ENCODE measurements at regions of chr2 and their contacts with region 1.

Region 1: GRCh38 chr2:71609958-71610357 is 156.6 kb downstream of the DYSF start:
- DNase-seq: peak; percentile 10
- H3K4me3 ChIP-seq: no peak overlapping the region
- H3K27ac ChIP-seq: no peak overlapping the region
- H3K4me1 ChIP-seq: no peaks in the 10 kb centered on the region
- H3K27me3 ChIP-seq: no peaks in the 10 kb centered on the region
- CTCF ChIP-seq: peak; percentile 6 to 42

Region 2: GRCh38 chr2:71447280-71447679 is 162.7 kb before region 1 on chr2:
- CTCF ChIA-PET with region 1: no interaction called
- dilution Hi-C with region 1: no loop called
- in situ Hi-C with region 1: no loop called
- intact Hi-C with region 1: no loop called
- DNase-seq: peak; percentile 34
- H3K4me3 ChIP-seq: no peak overlapping the region
- H3K27ac ChIP-seq: no peak overlapping the region
- H3K4me1 ChIP-seq: peaks cover 9% of the 10 kb centered on the region
- H3K27me3 ChIP-seq: no peaks in the 10 kb centered on the region
- CTCF ChIP-seq: no peak

Region 3: GRCh38 chr2:71558300-71559051 is 51.5 kb before region 1 on chr2:
- CTCF ChIA-PET with region 1: no interaction called
- dilution Hi-C with region 1: loop called (anchors 5 kb)
- in situ Hi-C with region 1: no loop called
- intact Hi-C with region 1: no loop called
- DNase-seq: no peak
- H3K4me3 ChIP-seq: no peak overlapping the region
- H3K27ac ChIP-seq: no peak overlapping the region
- H3K4me1 ChIP-seq: no peaks in the 10 kb centered on the region
- H3K27me3 ChIP-seq: no peaks in the 10 kb centered on the region
- CTCF ChIP-seq: no peak

Region 4: GRCh38 chr2:71662611-71663394 is 52.8 kb after region 1 on chr2:
- CTCF ChIA-PET with region 1: no interaction called
- dilution Hi-C with region 1: loop called (anchors 5 kb)
- in situ Hi-C with region 1: no loop called
- intact Hi-C with region 1: no loop called
- DNase-seq: no peak
- H3K4me3 ChIP-seq: no peak overlapping the region
- H3K27ac ChIP-seq: no peak overlapping the region
- H3K4me1 ChIP-seq: no peaks in the 10 kb centered on the region
- H3K27me3 ChIP-seq: no peaks in the 10 kb centered on the region
- CTCF ChIP-seq: no peak